ENCODE measurements at regions of chr21 and their contacts with region 1.

Region 1: GRCh38 chr21:34707876-34708325 is 39.1 kb downstream of the CLIC6 start:
- DNase-seq: peak; percentile 74
- CTCF ChIP-seq: no peak

Region 2: DNA sequence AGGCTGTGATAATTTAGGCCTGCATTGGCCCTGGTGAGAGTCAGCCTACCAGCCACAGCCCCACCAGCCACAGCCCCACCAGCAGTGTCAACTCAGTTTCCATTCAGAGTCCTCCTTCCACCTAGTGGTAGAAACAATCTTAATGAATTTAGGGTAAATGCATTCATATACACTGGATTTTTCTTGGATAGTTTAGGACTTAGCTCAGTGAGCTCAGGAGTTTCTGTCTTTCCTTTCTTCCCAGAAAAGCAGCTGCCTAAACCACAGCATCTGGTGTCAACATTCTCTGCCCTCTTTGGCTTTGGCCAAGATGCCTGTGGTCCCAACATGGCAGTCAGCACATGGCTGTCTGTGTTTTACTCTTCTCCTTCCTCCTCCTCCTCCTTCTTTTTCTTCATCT is 54.9 kb after region 1 on chr21:
- in situ Hi-C with region 1: loop called (anchors 10 kb)
- DNase-seq: no peak
- CTCF ChIP-seq: no peak